Vagina (tissue), 2 donors: ENCODE measurements at regions of chr19 and their contacts with region 1.

Region 1: GRCh38 chr19:14347999-14348889 is 33.0 kb upstream of the ADGRE5 start:
- DNase-seq: no peak
- H3K4me3 ChIP-seq: peak overlapping the region; percentile 13 to 29
- H3K27ac ChIP-seq: no peak overlapping the region
- H3K4me1 ChIP-seq: no peaks in the 10 kb centered on the region
- H3K27me3 ChIP-seq: no peaks in the 10 kb centered on the region
- CTCF ChIP-seq: peak; percentile 80 to 95 (median 87)
- POLR2A ChIP-seq: no peak

Region 2: GRCh38 chr19:14147797-14148605 is 200.2 kb before region 1 on chr19:
- intact Hi-C with region 1: loop called (anchors 5 kb)
- DNase-seq: no peak
- H3K4me3 ChIP-seq: peak overlapping the region in 1 of 2 donors; percentile 22
- H3K27ac ChIP-seq: peak overlapping the region; percentile 86
- H3K4me1 ChIP-seq: peaks cover 29% of the 10 kb centered on the region
- H3K27me3 ChIP-seq: no peaks in the 10 kb centered on the region
- CTCF ChIP-seq: peak; percentile 73 to 87 (median 85)
- POLR2A ChIP-seq: no peak

Region 3: DNA sequence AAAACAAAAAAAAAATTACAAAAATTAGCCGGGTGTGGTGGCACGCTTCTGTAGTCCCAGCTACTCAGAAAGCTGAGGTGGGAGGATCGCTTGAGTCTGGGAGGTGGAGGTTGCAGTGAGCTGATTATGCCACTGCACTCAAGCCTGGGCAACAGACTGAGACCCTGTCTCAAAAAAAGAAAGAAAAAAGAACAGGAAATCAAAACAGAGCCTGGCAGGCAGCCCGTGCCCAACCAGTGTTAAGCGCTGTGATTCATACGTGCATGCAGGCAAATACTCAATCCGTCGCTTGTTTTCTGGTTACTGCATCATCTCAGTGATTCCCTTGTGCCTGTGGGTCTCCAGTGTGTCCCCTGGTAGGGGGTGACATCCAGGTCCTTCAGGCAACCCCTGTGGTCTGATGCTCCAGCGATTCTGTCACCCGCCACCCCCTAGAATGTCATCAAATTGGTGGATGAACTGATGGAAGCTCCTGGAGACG is 52.7 kb after region 1 on chr19:
- intact Hi-C with region 1: no loop called
- DNase-seq: no peak
- H3K4me3 ChIP-seq: no peak overlapping the region
- H3K27ac ChIP-seq: no peak overlapping the region
- H3K4me1 ChIP-seq: peaks cover 11% of the 10 kb centered on the region
- H3K27me3 ChIP-seq: no peaks in the 10 kb centered on the region
- CTCF ChIP-seq: no peak
- POLR2A ChIP-seq: no peak

Region 4: GRCh38 chr19:14563989-14564651 is 215.9 kb after region 1 on chr19:
- intact Hi-C with region 1: no loop called
- DNase-seq: no peak
- H3K4me3 ChIP-seq: no peak overlapping the region
- H3K27ac ChIP-seq: no peak overlapping the region
- H3K4me1 ChIP-seq: peaks cover 51% of the 10 kb centered on the region
- H3K27me3 ChIP-seq: no peaks in the 10 kb centered on the region
- CTCF ChIP-seq: no peak
- POLR2A ChIP-seq: no peak